ENCODE measurements at regions of chr19 and their contacts with region 1.

Region 1: DNA sequence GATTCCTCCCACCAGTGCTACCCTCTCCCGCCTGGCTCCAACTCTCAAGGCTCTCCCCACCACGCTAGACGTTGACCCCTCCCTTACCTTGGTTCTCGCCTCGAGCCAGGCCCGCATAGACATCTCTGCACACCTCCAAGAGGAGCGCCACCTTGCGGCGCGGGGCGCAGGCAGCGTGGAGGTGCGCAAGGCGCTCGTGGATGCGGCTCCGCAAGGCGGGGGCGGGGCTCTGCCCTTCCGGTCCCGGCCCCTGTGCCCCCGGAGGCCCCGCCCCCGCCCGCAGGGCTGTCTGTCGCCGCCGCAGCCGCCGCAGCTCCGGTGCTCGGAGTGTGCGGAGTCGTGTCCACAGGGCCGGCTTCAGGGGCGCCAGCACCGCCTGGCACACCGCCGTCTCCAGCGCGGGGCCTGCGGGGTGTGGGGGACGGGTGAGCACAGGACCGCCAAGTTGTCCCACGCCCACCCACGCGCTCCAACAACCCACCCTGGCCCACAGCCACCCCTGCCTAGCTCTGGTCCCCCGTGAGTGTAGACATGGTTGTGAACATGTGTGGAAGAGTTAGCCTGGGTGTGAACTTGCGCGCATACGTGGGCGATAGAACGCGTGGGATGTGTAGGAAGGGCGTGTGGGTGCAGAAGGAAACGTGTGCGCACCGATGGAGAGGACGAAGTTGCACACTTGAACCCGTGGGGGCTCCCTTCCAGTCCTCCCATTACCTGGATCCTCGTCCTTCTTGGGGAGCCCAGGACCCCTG is 8.0 kb downstream of the RINL start:
- DNase-seq: peak; percentile 94
- H3K4me3 Mint-ChIP-seq: peak overlapping the region; percentile 76
- H3K27ac Mint-ChIP-seq: peak overlapping the region; percentile 78
- H3K4me1 Mint-ChIP-seq: peaks cover 55% of the 10 kb centered on the region
- H3K27me3 Mint-ChIP-seq: no peaks in the 10 kb centered on the region

Region 2: GRCh38 chr19:38769635-38770211 is 100.3 kb before region 1 on chr19:
- CTCF ChIA-PET with region 1: interaction called, 10 read pairs
- POLR2A ChIA-PET with region 1: no interaction called
- DNase-seq: peak; percentile 93
- H3K4me3 Mint-ChIP-seq: peak overlapping the region; percentile 52
- H3K27ac Mint-ChIP-seq: peak overlapping the region; percentile 70
- H3K4me1 Mint-ChIP-seq: peaks cover 12% of the 10 kb centered on the region
- H3K27me3 Mint-ChIP-seq: peaks cover 2% of the 10 kb centered on the region

Region 3: GRCh38 chr19:38805180-38805579 is 64.9 kb before region 1 on chr19:
- CTCF ChIA-PET with region 1: no interaction called
- POLR2A ChIA-PET with region 1: no interaction called
- DNase-seq: no peak
- H3K4me3 Mint-ChIP-seq: no peak overlapping the region
- H3K27ac Mint-ChIP-seq: no peak overlapping the region
- H3K4me1 Mint-ChIP-seq: peaks cover 6% of the 10 kb centered on the region
- H3K27me3 Mint-ChIP-seq: no peaks in the 10 kb centered on the region

Region 4: DNA sequence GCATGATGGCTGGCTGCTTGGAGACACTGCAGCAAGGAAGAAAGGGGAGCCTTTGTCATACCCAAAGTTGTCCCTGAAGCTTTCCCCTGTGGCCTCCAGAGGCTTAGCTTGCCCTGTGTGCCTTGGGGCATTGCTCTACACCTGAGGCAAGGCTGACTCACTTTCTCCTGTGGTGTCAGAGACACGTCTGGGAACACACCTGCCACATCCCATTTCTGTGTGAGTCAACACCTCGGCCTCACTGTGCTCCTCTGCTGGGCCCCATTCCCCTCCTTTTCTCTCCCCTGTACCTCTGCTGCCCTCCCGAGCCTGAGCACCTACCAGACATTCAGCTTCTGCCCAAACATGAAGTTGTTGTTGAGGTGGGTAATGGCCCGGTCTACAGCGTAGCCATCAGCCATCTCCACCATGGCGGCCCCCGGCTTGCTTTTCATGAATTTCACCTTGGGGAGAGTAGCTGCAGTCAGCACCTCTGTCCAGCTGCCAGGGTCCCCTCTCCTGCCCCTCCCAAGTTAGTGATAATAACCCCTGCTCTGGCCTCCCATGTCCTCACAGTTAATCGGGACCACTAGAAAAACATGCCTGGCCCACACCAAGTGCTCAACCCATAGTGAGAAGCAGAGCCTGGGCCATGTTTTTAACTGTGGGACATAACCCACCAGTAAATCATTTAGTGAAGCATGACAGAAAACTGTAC is 31.3 kb before region 1 on chr19:
- CTCF ChIA-PET with region 1: interaction called, 11 read pairs
- POLR2A ChIA-PET with region 1: interaction called, 15 read pairs
- DNase-seq: peak; percentile 32
- H3K4me3 Mint-ChIP-seq: no peak overlapping the region
- H3K27ac Mint-ChIP-seq: peak overlapping the region; percentile 61
- H3K4me1 Mint-ChIP-seq: peaks cover 51% of the 10 kb centered on the region
- H3K27me3 Mint-ChIP-seq: no peaks in the 10 kb centered on the region

Region 5: DNA sequence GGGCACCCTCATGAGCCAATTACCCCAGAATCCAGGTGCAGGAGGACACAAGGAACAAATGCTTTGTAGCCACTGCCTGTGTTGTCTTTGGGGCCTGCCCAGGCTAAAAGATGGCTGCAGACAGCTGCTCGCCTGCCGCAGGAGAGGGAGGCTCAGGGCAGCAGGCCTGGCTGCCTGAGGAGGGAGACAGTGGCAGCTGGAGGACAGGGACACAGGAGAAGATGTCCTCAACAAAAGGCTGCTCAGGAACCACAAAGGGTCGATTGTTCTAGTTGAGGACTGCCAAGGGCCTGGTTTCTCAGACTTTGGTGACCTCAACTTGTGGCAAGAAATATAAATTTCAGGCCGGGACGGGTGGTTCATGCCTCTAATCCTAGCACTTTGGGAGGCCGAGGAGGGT is 21.7 kb after region 1 on chr19:
- CTCF ChIA-PET with region 1: interaction called, 53 read pairs
- POLR2A ChIA-PET with region 1: no interaction called
- DNase-seq: no peak
- H3K4me3 Mint-ChIP-seq: no peak overlapping the region
- H3K27ac Mint-ChIP-seq: no peak overlapping the region
- H3K4me1 Mint-ChIP-seq: peaks cover 3% of the 10 kb centered on the region
- H3K27me3 Mint-ChIP-seq: no peaks in the 10 kb centered on the region

Measured in activated CD4-positive, alpha-beta memory T cell treated with anti-CD3 and anti-CD28 coated beads, Interleukin-2, amount 10 ng/mL, durations not matched to agents 7 days and 5 days (primary cell).